Heart left ventricle (tissue), 16 donors: ENCODE measurements at regions of chr1 and their contacts with region 1.

Region 1: GRCh38 chr1:226799634-226800281 is 60.7 kb upstream of the ITPKB start:
- DNase-seq: no peak
- ATAC-seq: peak in 3 of 4 donors; percentile 27 to 61 (median 57)
- H3K4me3 ChIP-seq: no peak overlapping the region
- H3K27ac ChIP-seq: peak overlapping the region in 10 of 12 donors; percentile 4 to 80 (median 52)
- H3K4me1 ChIP-seq: peaks cover 0 to 15% (median 6%) of the 10 kb centered on the region in 12 donors
- H3K27me3 ChIP-seq: no peaks in the 10 kb centered on the region
- CTCF ChIP-seq: no peak
- POLR2A ChIP-seq: no peak

Region 2: GRCh38 chr1:226766565-226766964 is 33.2 kb before region 1 on chr1:
- intact Hi-C with region 1: loop called in 1 of 10 experiments (anchors 5 kb)
- DNase-seq: no peak
- ATAC-seq: no peak
- H3K4me3 ChIP-seq: no peak overlapping the region
- H3K27ac ChIP-seq: no peak overlapping the region
- H3K4me1 ChIP-seq: no peaks in the 10 kb centered on the region
- H3K27me3 ChIP-seq: peaks cover 0 to 28% (median 0%) of the 10 kb centered on the region in 9 donors
- CTCF ChIP-seq: no peak
- POLR2A ChIP-seq: no peak

Region 3: GRCh38 chr1:226903819-226904716 is 104.3 kb after region 1 on chr1:
- intact Hi-C with region 1: no loop called
- DNase-seq: peak in 3 of 5 donors; percentile 38 to 40 (median 39)
- ATAC-seq: peak in 2 of 4 donors; percentile 15 to 29
- H3K4me3 ChIP-seq: no peak overlapping the region
- H3K27ac ChIP-seq: peak overlapping the region in 1 of 12 donors; percentile 61
- H3K4me1 ChIP-seq: peaks cover 0 to 11% (median 0%) of the 10 kb centered on the region in 12 donors
- H3K27me3 ChIP-seq: no peaks in the 10 kb centered on the region
- CTCF ChIP-seq: no peak
- POLR2A ChIP-seq: no peak